Tibial artery (tissue), 4 donors: ENCODE measurements at regions of chr20 and their contacts with region 1.

Region 1: DNA sequence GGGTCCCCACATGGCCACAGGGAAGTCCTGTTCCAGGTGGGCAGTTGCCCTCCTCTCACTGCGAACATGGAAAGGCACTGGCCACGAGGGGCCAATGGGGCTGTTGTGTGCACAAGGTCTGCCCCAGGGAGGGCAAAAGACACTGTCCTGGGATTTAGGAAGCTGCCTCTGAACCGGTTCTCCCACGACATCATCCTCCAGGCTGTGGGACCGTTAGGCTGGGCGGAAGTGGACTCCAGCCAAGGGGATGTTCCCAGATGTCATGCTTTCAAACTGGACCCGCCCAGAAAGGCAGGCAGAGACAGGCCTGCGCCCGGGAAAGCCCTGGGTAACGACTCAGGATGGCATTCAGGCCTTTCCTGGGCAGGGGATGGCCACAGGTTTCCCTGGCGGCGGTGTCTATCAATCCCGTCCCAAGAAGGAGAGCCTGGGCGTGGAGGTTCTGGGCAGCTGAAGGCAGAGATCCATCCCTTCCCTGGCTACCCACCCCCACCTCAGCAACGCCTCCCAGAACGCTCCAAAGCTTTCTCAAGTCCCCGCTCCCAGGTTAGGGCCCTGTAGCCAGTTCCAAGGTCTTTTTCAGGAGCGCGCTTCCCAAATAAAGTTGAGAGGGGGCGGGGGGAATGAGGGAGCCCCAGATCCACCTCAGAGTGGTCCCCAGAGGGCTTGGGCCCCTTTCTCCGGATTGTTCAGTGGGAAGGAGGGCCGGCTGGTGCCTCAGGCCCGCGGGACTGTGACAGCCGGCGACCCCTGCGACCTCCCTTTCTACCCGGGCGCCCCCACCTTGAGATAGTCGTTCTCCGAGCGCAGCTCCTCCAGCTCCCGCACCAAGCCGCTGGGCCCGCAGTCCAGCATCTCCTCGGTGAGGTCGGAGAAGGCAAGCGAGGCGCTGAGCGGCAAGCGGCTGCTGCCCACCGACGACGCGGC is 13.8 kb upstream of the TLDC2 start:
- DNase-seq: peak; percentile 93
- H3K4me3 ChIP-seq: peak overlapping the region; percentile 72 to 85
- H3K27ac ChIP-seq: peak overlapping the region; percentile 90
- H3K4me1 ChIP-seq: peaks cover 4 to 55% (median 47%) of the 10 kb centered on the region in 4 donors
- H3K27me3 ChIP-seq: no peaks in the 10 kb centered on the region
- CTCF ChIP-seq: no peak

Region 2: DNA sequence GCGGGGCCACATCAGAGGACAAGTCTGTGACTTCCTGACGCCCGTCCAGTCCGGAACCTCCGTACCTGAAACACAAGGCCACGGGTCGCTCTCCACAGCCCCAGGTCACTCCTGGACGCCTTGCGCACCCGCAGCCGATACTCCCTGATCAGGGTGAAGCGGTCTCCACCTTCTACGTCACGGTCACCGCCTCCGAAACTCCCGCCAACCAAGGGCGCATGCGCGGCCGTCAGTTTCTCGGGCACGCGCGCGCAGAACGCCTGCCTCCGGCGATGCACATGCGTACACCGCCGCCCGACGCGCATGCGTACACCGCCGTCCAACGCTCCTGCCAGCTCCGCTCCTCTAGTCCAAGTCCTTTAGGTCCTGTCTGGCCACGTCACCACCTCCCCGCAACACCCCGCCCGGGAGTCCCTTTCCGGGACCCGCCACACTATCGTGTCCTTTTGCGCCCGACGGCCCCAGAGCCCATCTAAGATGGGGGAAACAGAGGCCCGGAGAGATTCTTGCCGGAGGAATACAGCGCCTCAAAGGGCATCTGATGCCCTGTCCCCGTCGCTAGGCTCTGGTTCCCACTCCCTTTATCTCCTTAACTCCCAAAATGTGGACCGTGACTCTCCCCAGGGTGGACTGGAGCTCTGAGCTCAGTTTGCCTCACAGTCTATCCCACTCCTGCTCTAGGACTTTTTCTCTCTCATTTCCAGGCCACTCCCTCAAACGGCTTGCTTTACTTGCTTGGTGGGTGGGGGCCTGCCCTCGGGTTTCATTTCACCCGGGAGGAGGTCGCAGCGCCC is 88.3 kb before region 1 on chr20 and contains the start of gene DSN1:
- intact Hi-C with region 1: loop called (anchors 5 kb)
- DNase-seq: peak; percentile 97 to 99
- H3K4me3 ChIP-seq: peak within 1 kb of the TSS; percentile 71 to 77
- H3K27ac ChIP-seq: peak within 1 kb of the TSS; percentile 95 to 97
- H3K4me1 ChIP-seq: peaks cover 0 to 23% (median 15%) of the 10 kb centered on the region in 4 donors
- H3K27me3 ChIP-seq: no peaks in the 10 kb centered on the region
- CTCF ChIP-seq: no peak

Region 3: GRCh38 chr20:36819659-36820058 is 42.5 kb before region 1 on chr20:
- intact Hi-C with region 1: loop called (anchors 10 kb)
- DNase-seq: no peak
- H3K4me3 ChIP-seq: no peak overlapping the region
- H3K27ac ChIP-seq: peak overlapping the region; percentile 66 to 78
- H3K4me1 ChIP-seq: peaks cover 0 to 61% (median 54%) of the 10 kb centered on the region in 4 donors
- H3K27me3 ChIP-seq: no peaks in the 10 kb centered on the region
- CTCF ChIP-seq: no peak

Region 4: GRCh38 chr20:36886859-36887751 is 25.0 kb after region 1 on chr20:
- intact Hi-C with region 1: loop called (anchors 2 kb)
- DNase-seq: peak; percentile 80 to 91
- H3K4me3 ChIP-seq: no peak overlapping the region
- H3K27ac ChIP-seq: no peak overlapping the region
- H3K4me1 ChIP-seq: peaks cover 0 to 10% (median 7%) of the 10 kb centered on the region in 4 donors
- H3K27me3 ChIP-seq: no peaks in the 10 kb centered on the region
- CTCF ChIP-seq: peak; percentile 91 to 95